ENCODE measurements at regions of chr6 and their contacts with region 1.

Region 1: GRCh38 chr6:27157459-27158315 is 89.8 kb upstream of the PRSS16 start:
- DNase-seq: peak; percentile 76
- H3K4me3 Mint-ChIP-seq: peak overlapping the region; percentile 78
- H3K27ac Mint-ChIP-seq: peak overlapping the region; percentile 80
- H3K4me1 Mint-ChIP-seq: peaks cover 50% of the 10 kb centered on the region
- H3K27me3 Mint-ChIP-seq: no peaks in the 10 kb centered on the region

Region 2: GRCh38 chr6:27126815-27127537 is 30.7 kb before region 1 on chr6:
- intact Hi-C with region 1: loop called (anchors 1 kb)
- DNase-seq: peak; percentile 78
- H3K4me3 Mint-ChIP-seq: peak overlapping the region; percentile 84
- H3K27ac Mint-ChIP-seq: peak overlapping the region; percentile 91
- H3K4me1 Mint-ChIP-seq: peaks cover 39% of the 10 kb centered on the region
- H3K27me3 Mint-ChIP-seq: no peaks in the 10 kb centered on the region

Region 3: GRCh38 chr6:27138837-27139755 is 18.6 kb before region 1 on chr6:
- intact Hi-C with region 1: loop called (anchors 2 kb)
- DNase-seq: peak; percentile 76
- H3K4me3 Mint-ChIP-seq: peak overlapping the region; percentile 97
- H3K27ac Mint-ChIP-seq: peak overlapping the region; percentile 99
- H3K4me1 Mint-ChIP-seq: peaks cover 40% of the 10 kb centered on the region
- H3K27me3 Mint-ChIP-seq: no peaks in the 10 kb centered on the region

Region 4: DNA sequence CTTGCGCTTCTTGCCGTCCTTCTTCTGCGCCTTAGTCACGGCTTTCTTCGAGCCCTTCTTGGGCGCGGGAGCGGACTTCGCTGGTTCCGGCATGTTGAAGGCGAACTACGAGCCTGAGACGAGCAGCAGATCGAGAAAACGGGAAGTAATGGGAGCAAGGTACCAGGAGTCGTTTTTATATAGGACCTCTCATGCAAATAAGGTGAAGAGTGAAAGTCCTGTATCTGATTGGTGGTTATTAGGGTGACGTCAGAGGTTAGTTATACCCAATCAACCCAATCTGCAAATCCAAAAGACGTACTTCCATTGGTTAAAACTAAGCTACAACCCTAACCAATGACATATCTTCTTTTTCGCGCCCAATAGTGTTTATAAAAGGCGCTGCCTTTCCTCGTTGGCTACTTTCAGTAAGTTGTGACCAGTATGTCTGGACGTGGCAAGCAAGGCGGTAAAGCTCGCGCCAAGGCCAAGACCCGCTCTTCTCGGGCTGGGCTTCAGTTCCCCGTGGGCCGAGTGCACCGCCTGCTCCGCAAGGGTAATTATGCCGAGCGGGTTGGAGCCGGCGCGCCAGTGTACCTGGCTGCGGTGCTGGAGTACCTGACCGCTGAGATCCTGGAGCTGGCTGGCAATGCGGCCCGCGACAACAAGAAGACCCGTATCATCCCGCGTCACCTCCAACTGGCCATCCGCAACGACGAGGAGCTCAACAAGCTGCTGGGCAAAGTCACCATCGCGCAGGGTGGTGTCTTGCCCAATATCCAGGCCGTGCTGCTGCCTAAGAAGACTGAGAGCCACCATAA is 10.8 kb before region 1 on chr6:
- intact Hi-C with region 1: loop called (anchors 1 kb)
- DNase-seq: peak; percentile 84
- H3K4me3 Mint-ChIP-seq: no peak overlapping the region
- H3K27ac Mint-ChIP-seq: no peak overlapping the region
- H3K4me1 Mint-ChIP-seq: peaks cover 12% of the 10 kb centered on the region
- H3K27me3 Mint-ChIP-seq: no peaks in the 10 kb centered on the region

Region 5: GRCh38 chr6:27177485-27178406 is 20.1 kb after region 1 on chr6:
- intact Hi-C with region 1: loop called (anchors 2 kb)
- DNase-seq: peak; percentile 65
- H3K4me3 Mint-ChIP-seq: peak overlapping the region; percentile 90
- H3K27ac Mint-ChIP-seq: peak overlapping the region; percentile 87
- H3K4me1 Mint-ChIP-seq: peaks cover 11% of the 10 kb centered on the region
- H3K27me3 Mint-ChIP-seq: peaks cover 37% of the 10 kb centered on the region